HCT116 (cell line): ENCODE measurements at regions of chr3 and their contacts with region 1.

Region 1: DNA sequence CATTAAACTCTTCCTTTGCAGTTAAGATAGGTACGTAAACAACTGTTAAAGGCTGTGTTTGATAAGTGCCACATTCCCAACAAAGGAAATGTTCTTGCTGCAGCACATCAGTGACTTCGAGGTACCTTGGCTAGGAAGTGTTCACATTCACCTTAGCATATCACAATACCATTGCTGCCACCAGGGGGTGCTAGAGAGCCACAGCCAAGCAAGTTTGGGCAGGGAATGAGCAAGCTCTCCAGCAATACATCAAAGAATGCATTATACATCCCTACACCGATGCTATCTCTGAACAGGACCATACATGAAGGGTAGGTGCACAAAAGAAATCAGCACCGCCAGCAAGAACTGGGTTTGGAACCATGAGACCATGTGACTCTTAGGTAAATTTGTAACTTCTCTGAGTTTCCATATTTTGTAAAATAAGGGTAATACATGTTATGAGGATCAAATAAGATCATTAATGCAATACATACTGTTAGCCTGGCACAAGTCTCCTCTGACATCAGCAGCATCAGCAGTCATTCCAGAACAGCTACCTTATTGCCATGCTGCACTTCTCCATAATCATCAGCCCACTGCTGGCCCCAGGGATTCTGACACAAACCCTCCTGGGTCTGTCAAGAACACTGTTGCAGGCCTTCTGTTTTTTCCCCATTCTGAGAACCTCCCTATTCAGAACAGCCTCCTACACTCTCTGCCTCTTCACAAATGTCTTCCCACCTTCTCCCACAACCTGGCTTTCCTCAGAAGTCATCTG is 37.6 kb downstream of the RYK start:
- DNase-seq: peak; percentile 60
- ATAC-seq: peak; percentile 94
- H3K4me3 ChIP-seq: no peak overlapping the region
- H3K27ac ChIP-seq: no peak overlapping the region
- H3K4me1 ChIP-seq: no peaks in the 10 kb centered on the region
- H3K27me3 ChIP-seq: no peaks in the 10 kb centered on the region
- CTCF ChIP-seq: peak; percentile 84 to 99 (median 96)
- POLR2A ChIP-seq: no peak
- RAD21 ChIP-seq: peak; percentile 82

Region 2: GRCh38 chr3:133821767-133822638 is 391.1 kb before region 1 on chr3:
- CTCF ChIA-PET with region 1: interaction called, 3 read pairs
- POLR2A ChIA-PET with region 1: no interaction called
- RAD21 ChIA-PET with region 1: no interaction called
- intact Hi-C with region 1: loop called (anchors 1 kb)
- DNase-seq: peak; percentile 55
- ATAC-seq: peak; percentile 82
- H3K4me3 ChIP-seq: no peak overlapping the region
- H3K27ac ChIP-seq: no peak overlapping the region
- H3K4me1 ChIP-seq: no peaks in the 10 kb centered on the region; a peak in 1 of 4 replicates
- H3K27me3 ChIP-seq: no peaks in the 10 kb centered on the region
- CTCF ChIP-seq: peak; percentile 29 to 51 (median 43); a peak in 4 of 6 replicates
- POLR2A ChIP-seq: no peak
- RAD21 ChIP-seq: peak; percentile 55

Region 3: DNA sequence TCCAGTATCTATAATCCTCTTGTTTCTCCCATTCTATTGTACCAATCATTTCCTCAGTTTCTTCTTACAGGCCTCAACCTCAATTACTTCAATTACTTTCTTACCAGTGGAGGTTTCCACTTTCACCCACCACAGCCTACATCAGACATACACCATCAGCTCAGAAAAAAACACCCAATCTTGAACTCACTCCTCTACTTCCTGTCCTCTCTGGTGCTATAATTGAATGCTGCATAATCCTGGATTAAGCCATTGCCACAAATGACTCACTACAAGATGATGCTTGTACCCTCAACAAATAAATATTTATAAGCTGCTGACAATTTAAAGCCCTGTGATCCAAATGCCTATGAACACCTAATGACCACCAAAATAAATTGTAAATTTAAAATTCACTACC is 19.1 kb after region 1 on chr3:
- CTCF ChIA-PET with region 1: interaction called, 10 read pairs
- POLR2A ChIA-PET with region 1: no interaction called
- RAD21 ChIA-PET with region 1: no interaction called
- intact Hi-C with region 1: no loop called
- DNase-seq: no peak
- ATAC-seq: no peak
- H3K4me3 ChIP-seq: no peak overlapping the region
- H3K27ac ChIP-seq: no peak overlapping the region
- H3K4me1 ChIP-seq: peaks cover 0 to 7% of the 10 kb centered on the region in 2 experiments; a peak in 2 of 4 replicates
- H3K27me3 ChIP-seq: no peaks in the 10 kb centered on the region
- CTCF ChIP-seq: no peak
- POLR2A ChIP-seq: no peak
- RAD21 ChIP-seq: no peak

Region 4: GRCh38 chr3:134260984-134261383 is 47.9 kb after region 1 on chr3:
- CTCF ChIA-PET with region 1: no interaction called
- POLR2A ChIA-PET with region 1: no interaction called
- RAD21 ChIA-PET with region 1: no interaction called
- intact Hi-C with region 1: no loop called
- DNase-seq: no peak
- ATAC-seq: no peak
- H3K4me3 ChIP-seq: no peak overlapping the region
- H3K27ac ChIP-seq: no peak overlapping the region
- H3K4me1 ChIP-seq: 0 out of 4 replicates have a peak, but pooled peaks cover 0 to 5% of the 10 kb centered on the region in 2 experiments
- H3K27me3 ChIP-seq: no peaks in the 10 kb centered on the region
- CTCF ChIP-seq: no peak
- POLR2A ChIP-seq: no peak
- RAD21 ChIP-seq: no peak

Region 5: GRCh38 chr3:134373994-134374790 is 161.1 kb after region 1 on chr3 and contains the start of gene AMOTL2:
- CTCF ChIA-PET with region 1: interaction called, 4 read pairs
- POLR2A ChIA-PET with region 1: no interaction called
- RAD21 ChIA-PET with region 1: no interaction called
- intact Hi-C with region 1: loop called (anchors 10 kb)
- DNase-seq: peak; percentile 87
- ATAC-seq: peak; percentile 71
- H3K4me3 ChIP-seq: peak within 1 kb of the TSS; percentile 57 to 92
- H3K27ac ChIP-seq: peak within 1 kb of the TSS; percentile 98
- H3K4me1 ChIP-seq: peaks cover 40 to 79% of the 10 kb centered on the region in 2 experiments
- H3K27me3 ChIP-seq: no peaks in the 10 kb centered on the region
- CTCF ChIP-seq: no peak
- POLR2A ChIP-seq: peak; percentile 88
- RAD21 ChIP-seq: no peak
- total RNA-seq, gene AMOTL2: 54.0 TPM